ENCODE measurements at regions of chr11 and their contacts with region 1.

Region 1: DNA sequence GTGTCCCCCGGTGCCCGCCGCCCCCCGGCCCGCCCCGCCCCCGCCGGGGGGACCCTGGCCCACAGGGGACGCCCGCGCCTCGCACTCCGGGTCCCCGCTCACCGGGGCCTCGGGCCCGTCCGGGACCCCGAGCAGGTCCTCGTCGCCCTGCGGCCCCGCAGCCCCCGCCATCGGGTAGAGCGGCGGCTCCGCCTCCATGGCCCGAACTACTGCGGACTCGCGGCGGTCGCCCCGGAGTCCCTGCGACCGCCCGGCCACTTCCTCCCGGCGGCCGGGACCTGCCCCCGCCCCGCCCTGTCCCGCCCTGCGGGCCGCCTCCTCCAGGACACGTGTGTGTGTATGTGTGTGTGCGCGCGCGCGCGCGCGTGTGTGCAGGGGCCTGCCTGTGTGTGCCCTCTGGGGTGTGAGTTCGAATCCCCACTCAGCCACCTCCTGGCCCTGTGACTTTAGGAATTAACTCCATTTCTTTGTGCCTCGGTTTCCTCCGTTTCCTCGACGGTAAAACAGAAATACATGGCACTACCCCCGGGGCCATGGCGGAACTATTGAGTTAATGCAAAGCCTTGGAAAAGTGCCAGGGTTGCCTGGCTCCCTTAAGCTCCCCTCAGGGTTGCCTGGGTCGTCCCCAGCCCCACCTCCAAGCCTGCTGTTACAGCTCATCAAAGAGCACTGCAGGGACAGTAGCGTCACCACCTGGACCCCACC is at the start of gene UNC93B1:
- DNase-seq: peak; percentile 77 to 84 (median 78)
- H3K4me3 ChIP-seq: peak within 1 kb of the TSS; percentile 52 to 59
- H3K4me3 Mint-ChIP-seq: peak within 1 kb of the TSS; percentile 86 to 94 (median 88)
- H3K27ac ChIP-seq: no peak within 1 kb of the TSS
- H3K27ac Mint-ChIP-seq: peak within 1 kb of the TSS; percentile 73 to 90 (median 88)
- H3K4me1 ChIP-seq: peaks cover 11% of the 10 kb centered on the region
- H3K4me1 Mint-ChIP-seq: peaks cover 8 to 31% (median 15%) of the 10 kb centered on the region in 4 donors
- H3K27me3 ChIP-seq: no peaks in the 10 kb centered on the region
- H3K27me3 Mint-ChIP-seq: no peaks in the 10 kb centered on the region
- total RNA-seq, gene UNC93B1: 22.4 to 26.8 TPM

Region 2: DNA sequence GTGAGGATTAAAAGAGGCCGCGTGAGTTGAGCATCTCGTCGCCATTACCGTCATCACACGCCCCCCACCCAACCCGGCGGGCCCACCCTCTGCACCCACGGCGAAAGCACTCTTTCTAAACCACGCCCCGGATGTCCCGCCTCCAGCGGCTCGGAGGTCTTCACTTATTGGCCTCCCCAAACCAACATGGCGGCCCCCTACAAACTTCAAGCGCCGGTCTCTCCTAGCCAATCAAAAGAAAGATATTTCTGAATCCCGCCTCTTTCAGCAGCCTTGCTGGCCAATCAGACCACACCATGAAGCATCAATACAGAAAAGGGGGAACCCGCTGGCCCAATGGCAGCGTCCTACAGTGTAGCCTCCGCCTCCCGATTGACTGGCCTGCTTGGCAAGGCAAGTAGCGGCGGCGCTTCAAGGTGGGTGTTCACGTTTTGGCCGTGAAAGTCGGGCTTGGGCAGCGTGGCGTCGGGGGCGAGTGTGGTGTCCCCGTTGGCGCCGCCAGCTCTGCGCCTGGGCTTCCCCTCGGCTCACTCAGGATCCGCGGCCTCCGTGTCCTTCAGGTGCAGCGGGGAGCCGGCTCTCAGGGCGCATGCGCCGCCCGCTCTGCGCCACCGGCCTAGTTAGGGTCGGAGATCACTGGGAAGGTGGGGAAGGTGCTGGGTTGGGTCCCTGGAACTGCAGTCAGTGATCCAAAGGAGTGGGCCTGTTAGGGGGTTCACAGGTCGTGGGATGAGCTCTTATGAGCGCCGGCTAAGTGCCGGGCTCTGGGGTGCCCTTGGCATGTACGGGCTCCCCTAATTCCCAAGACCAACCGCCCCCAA is 26.5 kb after region 1 on chr11 and contains the start of gene NDUFS8:
- CTCF ChIA-PET with region 1: no interaction called
- POLR2A ChIA-PET with region 1: no interaction called
- intact Hi-C with region 1: loop called (anchors 1 kb)
- DNase-seq: peak; percentile 96 to 99 (median 98)
- H3K4me3 ChIP-seq: peak within 1 kb of the TSS; percentile 77 to 88
- H3K4me3 Mint-ChIP-seq: peak within 1 kb of the TSS; percentile 94 to 99 (median 97)
- H3K27ac ChIP-seq: peak within 1 kb of the TSS; percentile 88
- H3K27ac Mint-ChIP-seq: peak within 1 kb of the TSS; percentile 85 to 98 (median 94)
- H3K4me1 ChIP-seq: peaks cover 20% of the 10 kb centered on the region
- H3K4me1 Mint-ChIP-seq: peaks cover 10 to 29% (median 16%) of the 10 kb centered on the region in 4 donors
- H3K27me3 ChIP-seq: no peaks in the 10 kb centered on the region
- H3K27me3 Mint-ChIP-seq: peaks cover 0 to 5% of the 10 kb centered on the region in 2 donors
- total RNA-seq, gene NDUFS8: 70.0 to 79.3 TPM

Region 3: GRCh38 chr11:68038718-68039525 is 34.9 kb after region 1 on chr11 and contains the start of gene TCIRG1:
- CTCF ChIA-PET with region 1: no interaction called
- POLR2A ChIA-PET with region 1: interaction called, 12 read pairs
- intact Hi-C with region 1: no loop called
- DNase-seq: peak; percentile 26 to 53 (median 44)
- H3K4me3 ChIP-seq: peak within 1 kb of the TSS; percentile 85 to 92
- H3K4me3 Mint-ChIP-seq: peak within 1 kb of the TSS; percentile 86 to 94 (median 92)
- H3K27ac ChIP-seq: peak within 1 kb of the TSS; percentile 90
- H3K27ac Mint-ChIP-seq: peak within 1 kb of the TSS; percentile 90 to 97 (median 96)
- H3K4me1 ChIP-seq: peaks cover 41% of the 10 kb centered on the region
- H3K4me1 Mint-ChIP-seq: peaks cover 9 to 41% (median 25%) of the 10 kb centered on the region in 4 donors
- H3K27me3 ChIP-seq: no peaks in the 10 kb centered on the region
- H3K27me3 Mint-ChIP-seq: no peaks in the 10 kb centered on the region
- total RNA-seq, gene TCIRG1: 261 to 266 TPM

Region 4: GRCh38 chr11:68168694-68169093 is 164.7 kb after region 1 on chr11:
- CTCF ChIA-PET with region 1: no interaction called
- POLR2A ChIA-PET with region 1: no interaction called
- intact Hi-C with region 1: no loop called
- DNase-seq: no peak
- H3K4me3 ChIP-seq: no peak overlapping the region
- H3K4me3 Mint-ChIP-seq: peak overlapping the region in 1 of 8 donors; percentile 60
- H3K27ac ChIP-seq: no peak overlapping the region
- H3K27ac Mint-ChIP-seq: no peak overlapping the region
- H3K4me1 ChIP-seq: no peaks in the 10 kb centered on the region
- H3K4me1 Mint-ChIP-seq: no peaks in the 10 kb centered on the region
- H3K27me3 ChIP-seq: no peaks in the 10 kb centered on the region
- H3K27me3 Mint-ChIP-seq: no peaks in the 10 kb centered on the region